Natural killer cell (primary cell): ENCODE measurements at regions of chr5 and their contacts with region 1.

Region 1: DNA sequence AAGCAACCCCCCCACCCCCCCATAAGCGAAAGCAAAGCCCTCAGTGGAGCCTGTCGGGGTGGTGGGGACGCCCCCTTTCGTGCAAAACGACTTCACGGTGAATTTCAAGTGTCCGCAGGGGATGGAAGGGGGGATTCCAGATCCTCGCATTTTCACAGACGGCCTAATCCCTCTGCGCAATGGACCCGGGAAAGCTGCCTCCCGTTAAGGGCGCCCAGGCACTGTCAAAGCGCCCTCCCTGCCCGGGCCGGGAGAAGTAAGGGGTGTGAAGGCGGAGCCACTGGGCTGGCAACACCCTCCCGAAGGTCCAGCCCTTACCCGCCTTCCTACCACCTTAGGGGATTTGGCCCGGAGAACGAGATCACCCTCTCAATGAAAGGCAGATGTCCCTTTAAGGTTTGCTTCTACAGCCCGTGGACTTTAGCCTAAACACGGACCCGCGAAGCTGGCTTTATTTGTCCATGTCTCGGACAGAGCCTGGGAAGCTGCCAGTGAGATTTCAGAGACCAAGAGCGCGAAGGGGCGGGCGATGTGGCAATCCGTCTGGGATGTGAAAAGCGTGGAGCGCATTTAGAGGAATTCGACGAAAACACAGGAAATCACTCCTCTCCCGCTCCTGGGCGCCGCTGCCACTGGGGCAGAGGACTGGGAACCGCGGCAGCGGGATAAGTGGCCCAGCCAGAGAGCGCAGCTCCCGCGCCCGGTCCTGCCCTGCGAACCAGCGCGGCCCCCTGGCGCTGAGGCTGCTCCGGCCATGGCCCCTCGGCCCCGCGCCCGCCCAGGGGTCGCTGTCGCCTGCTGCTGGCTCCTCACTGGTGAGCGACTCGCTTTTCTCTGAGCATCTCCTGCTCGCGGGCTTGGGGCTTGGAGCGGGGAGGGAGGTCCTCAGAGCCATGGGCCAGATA is at the starts of genes ITGA1 and PELO:
- DNase-seq: peak; percentile 37 to 78
- ATAC-seq: peak; percentile 78 to 82 (median 81)
- H3K4me3 ChIP-seq: peak within 1 kb of the TSS; percentile 61
- H3K4me3 Mint-ChIP-seq: peak within 1 kb of the TSS; percentile 70
- H3K27ac ChIP-seq: no peak within 1 kb of the TSS
- H3K27ac Mint-ChIP-seq: peak within 1 kb of the TSS in 1 of 2 donors; percentile 69
- H3K4me1 ChIP-seq: peaks cover 18% of the 10 kb centered on the region
- H3K4me1 Mint-ChIP-seq: peaks cover 18 to 21% of the 10 kb centered on the region in 2 donors
- H3K27me3 ChIP-seq: peaks cover 34% of the 10 kb centered on the region
- H3K27me3 Mint-ChIP-seq: peaks cover 30 to 56% of the 10 kb centered on the region in 2 donors
- CTCF ChIP-seq: no peak
- total RNA-seq, gene ITGA1: 0.45 to 0.82 (median 0.47) TPM
- total RNA-seq, gene PELO: 2.6 to 3.9 (median 3.7) TPM

Region 2: DNA sequence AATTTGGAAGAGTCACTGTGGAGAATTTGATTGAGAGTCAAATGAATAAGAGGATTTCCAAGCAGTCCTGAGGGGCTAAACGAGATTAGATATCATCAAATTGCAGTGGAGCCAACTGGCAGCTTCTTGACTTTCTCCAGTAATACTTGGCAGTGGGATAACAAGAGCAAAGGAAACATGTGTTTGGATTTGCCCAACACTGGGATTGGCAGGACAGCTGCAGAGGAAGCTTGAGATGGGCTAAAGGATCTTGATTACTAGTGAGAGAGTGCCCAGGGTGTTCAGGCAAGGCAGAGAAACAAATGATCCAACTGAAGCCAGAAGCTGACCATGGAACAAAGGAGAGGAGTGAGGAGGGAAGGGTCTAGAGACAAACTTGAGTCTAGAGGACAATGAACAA is 1760.6 kb before region 1 on chr5:
- intact Hi-C with region 1: no loop called
- DNase-seq: no peak
- ATAC-seq: no peak
- H3K4me3 ChIP-seq: no peak overlapping the region
- H3K4me3 Mint-ChIP-seq: no peak overlapping the region
- H3K27ac ChIP-seq: no peak overlapping the region
- H3K27ac Mint-ChIP-seq: no peak overlapping the region
- H3K4me1 ChIP-seq: no peaks in the 10 kb centered on the region
- H3K4me1 Mint-ChIP-seq: no peaks in the 10 kb centered on the region
- H3K27me3 ChIP-seq: no peaks in the 10 kb centered on the region
- H3K27me3 Mint-ChIP-seq: no peaks in the 10 kb centered on the region
- CTCF ChIP-seq: no peak

Region 3: DNA sequence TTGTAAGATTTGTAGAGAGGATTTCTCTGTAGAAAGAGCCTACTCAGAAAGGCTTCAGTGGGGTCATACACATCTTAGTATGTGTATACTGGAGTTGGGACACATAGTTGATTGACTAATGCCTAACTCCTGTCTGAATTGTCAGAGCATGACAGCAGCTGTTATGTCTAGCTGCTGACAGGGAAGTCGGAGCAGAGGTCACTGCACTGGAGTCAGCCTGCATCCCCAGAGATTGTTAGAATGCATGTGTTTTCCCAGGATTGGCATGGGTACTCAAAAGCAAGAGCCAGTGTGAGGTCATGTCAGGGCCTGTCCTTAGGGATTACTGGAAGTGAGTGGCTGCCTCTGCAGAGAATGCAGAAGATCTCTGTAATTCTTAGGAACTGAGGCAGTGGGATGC is 82.6 kb after region 1 on chr5:
- intact Hi-C with region 1: no loop called
- DNase-seq: no peak
- ATAC-seq: no peak
- H3K4me3 ChIP-seq: no peak overlapping the region
- H3K4me3 Mint-ChIP-seq: no peak overlapping the region
- H3K27ac ChIP-seq: no peak overlapping the region
- H3K27ac Mint-ChIP-seq: no peak overlapping the region
- H3K4me1 ChIP-seq: no peaks in the 10 kb centered on the region
- H3K4me1 Mint-ChIP-seq: no peaks in the 10 kb centered on the region
- H3K27me3 ChIP-seq: peaks cover 2% of the 10 kb centered on the region
- H3K27me3 Mint-ChIP-seq: peaks cover 16 to 23% of the 10 kb centered on the region in 2 donors
- CTCF ChIP-seq: no peak

Region 4: DNA sequence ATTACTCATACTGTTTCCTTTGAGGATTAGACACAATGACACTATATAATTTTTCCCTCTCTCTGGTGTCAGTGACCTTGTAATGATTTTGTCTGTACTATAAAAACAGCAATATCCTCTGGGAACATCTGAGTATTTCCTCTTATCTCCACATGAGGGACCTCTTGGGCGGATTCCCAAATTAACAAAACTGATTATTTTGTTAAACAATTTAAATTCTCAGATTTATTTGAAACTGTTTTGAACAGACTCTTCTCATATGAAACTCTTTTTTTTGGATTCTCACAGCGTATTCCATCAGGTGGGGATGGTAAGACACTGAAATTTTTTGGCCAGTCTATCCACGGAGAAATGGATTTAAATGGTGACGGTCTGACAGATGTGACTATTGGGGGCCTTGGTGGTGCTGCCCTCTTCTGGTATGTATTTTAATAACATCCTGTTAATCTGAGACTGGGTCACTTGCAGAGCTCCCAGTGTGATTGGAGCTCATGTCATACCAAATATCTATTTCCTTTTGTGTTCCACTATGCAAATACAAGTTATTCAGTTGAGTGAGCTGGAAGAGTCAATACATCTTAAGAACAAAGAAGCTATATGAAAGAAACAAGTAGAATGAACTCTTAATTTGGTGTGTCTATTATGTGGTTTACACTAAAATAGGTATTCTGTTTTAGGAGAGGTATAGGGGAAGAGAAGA is 127.5 kb after region 1 on chr5:
- intact Hi-C with region 1: loop called (anchors 1 kb)
- DNase-seq: peak in 1 of 2 donors; percentile 81
- ATAC-seq: peak; percentile 87 to 95 (median 91)
- H3K4me3 ChIP-seq: no peak overlapping the region
- H3K4me3 Mint-ChIP-seq: no peak overlapping the region
- H3K27ac ChIP-seq: no peak overlapping the region
- H3K27ac Mint-ChIP-seq: no peak overlapping the region
- H3K4me1 ChIP-seq: no peaks in the 10 kb centered on the region
- H3K4me1 Mint-ChIP-seq: peaks cover 6 to 9% of the 10 kb centered on the region in 2 donors
- H3K27me3 ChIP-seq: no peaks in the 10 kb centered on the region
- H3K27me3 Mint-ChIP-seq: peaks cover 10% of the 10 kb centered on the region in 2 donors
- CTCF ChIP-seq: peak; percentile 82